ENCODE measurements at regions of chr6 and their contacts with region 1.

Region 1: GRCh38 chr6:43687437-43688347 is at the start of gene MRPS18A:
- DNase-seq: peak; percentile 81
- H3K4me3 Mint-ChIP-seq: peak within 1 kb of the TSS; percentile 92
- H3K27ac Mint-ChIP-seq: peak within 1 kb of the TSS; percentile 85
- H3K4me1 Mint-ChIP-seq: peaks cover 46% of the 10 kb centered on the region
- H3K27me3 Mint-ChIP-seq: no peaks in the 10 kb centered on the region
- total RNA-seq, gene MRPS18A: 55.0 and 55.9 TPM in 2 replicates

Region 2: DNA sequence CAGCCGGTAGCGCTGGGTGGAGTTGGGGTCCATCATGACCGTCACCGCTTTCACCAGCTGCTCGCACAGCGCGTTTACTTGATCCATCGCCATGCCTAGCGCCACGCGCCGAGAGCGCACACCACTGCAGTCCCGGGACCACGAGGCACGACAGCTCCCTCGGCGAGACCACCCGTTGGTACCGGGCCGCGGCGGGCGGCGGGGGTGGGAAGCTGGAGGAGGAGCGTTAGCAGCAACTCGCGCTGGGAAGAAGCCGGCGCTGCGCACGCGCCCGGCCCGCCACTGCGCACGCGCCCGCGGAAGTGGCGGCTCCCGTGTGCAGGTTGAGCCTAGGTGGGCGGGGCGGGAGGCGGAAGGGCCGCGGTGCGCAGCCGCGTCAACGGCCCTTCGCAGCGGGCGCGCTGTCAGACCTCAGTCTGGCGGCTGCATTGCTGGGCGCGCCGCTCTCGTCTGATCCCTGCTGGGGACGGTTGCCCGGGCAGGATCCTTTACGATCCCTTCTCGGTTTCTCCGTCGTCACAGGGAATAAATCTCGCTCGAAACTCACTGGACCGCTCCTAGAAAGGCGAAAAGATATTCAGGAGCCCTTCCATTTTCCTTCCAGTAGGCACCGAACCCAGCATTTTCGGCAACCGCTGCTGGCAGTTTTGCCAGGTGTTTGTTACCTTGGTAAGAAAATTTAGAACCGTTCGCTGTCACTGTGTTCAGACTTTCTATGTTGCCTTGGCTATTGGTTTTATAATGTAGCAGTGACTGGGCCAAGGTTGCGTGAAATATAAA is 111.7 kb before region 1 on chr6 and contains the starts of genes POLH and XPO5:
- intact Hi-C with region 1: loop called (anchors 5 kb)
- DNase-seq: peak; percentile 90
- H3K4me3 Mint-ChIP-seq: peak within 1 kb of the TSS; percentile 91
- H3K27ac Mint-ChIP-seq: peak within 1 kb of the TSS; percentile 86
- H3K4me1 Mint-ChIP-seq: peaks cover 43% of the 10 kb centered on the region
- H3K27me3 Mint-ChIP-seq: no peaks in the 10 kb centered on the region
- total RNA-seq, gene POLH: 35.7 and 39.1 TPM in 2 replicates
- total RNA-seq, gene XPO5: 135 and 149 TPM in 2 replicates

Region 3: GRCh38 chr6:43635387-43636307 is 52.0 kb before region 1 on chr6 and contains the start of gene MAD2L1BP:
- intact Hi-C with region 1: loop called (anchors 2 kb)
- DNase-seq: peak; percentile 88
- H3K4me3 Mint-ChIP-seq: peak within 1 kb of the TSS; percentile 94
- H3K27ac Mint-ChIP-seq: peak within 1 kb of the TSS; percentile 90
- H3K4me1 Mint-ChIP-seq: peaks cover 52% of the 10 kb centered on the region
- H3K27me3 Mint-ChIP-seq: no peaks in the 10 kb centered on the region
- total RNA-seq, gene MAD2L1BP: 34.8 and 39.0 TPM in 2 replicates

Region 4: GRCh38 chr6:43644931-43645612 is 42.6 kb before region 1 on chr6 and contains the start of gene RSPH9:
- intact Hi-C with region 1: loop called (anchors 2 kb)
- DNase-seq: peak; percentile 63
- H3K4me3 Mint-ChIP-seq: peak within 1 kb of the TSS; percentile 87
- H3K27ac Mint-ChIP-seq: peak within 1 kb of the TSS; percentile 72
- H3K4me1 Mint-ChIP-seq: peaks cover 25% of the 10 kb centered on the region
- H3K27me3 Mint-ChIP-seq: peaks cover 3% of the 10 kb centered on the region
- total RNA-seq, gene RSPH9: not detected in 2 replicates

Region 5: GRCh38 chr6:43708860-43709653 is 21.4 kb after region 1 on chr6:
- intact Hi-C with region 1: loop called (anchors 1 kb)
- DNase-seq: no peak
- H3K4me3 Mint-ChIP-seq: no peak overlapping the region
- H3K27ac Mint-ChIP-seq: peak overlapping the region; percentile 50
- H3K4me1 Mint-ChIP-seq: peaks cover 30% of the 10 kb centered on the region
- H3K27me3 Mint-ChIP-seq: peaks cover 16% of the 10 kb centered on the region